ENCODE measurements at regions of chr10 and their contacts with region 1.

Region 1: GRCh38 chr10:100338434-100339036 is 8.5 kb upstream of the SCD start:
- DNase-seq: peak; percentile 76 to 88
- ATAC-seq: peak; percentile 89 to 96 (median 94)
- H3K4me3 ChIP-seq: no peak overlapping the region
- H3K4me3 Mint-ChIP-seq: no peak overlapping the region
- H3K27ac ChIP-seq: no peak overlapping the region
- H3K27ac Mint-ChIP-seq: peak overlapping the region in 1 of 2 donors; percentile 6
- H3K4me1 ChIP-seq: peaks cover 12% of the 10 kb centered on the region
- H3K4me1 Mint-ChIP-seq: peaks cover 0 to 10% of the 10 kb centered on the region in 2 donors
- H3K27me3 ChIP-seq: no peaks in the 10 kb centered on the region
- H3K27me3 Mint-ChIP-seq: peaks cover 12 to 20% of the 10 kb centered on the region in 2 donors
- CTCF ChIP-seq: peak; percentile 91

Region 2: GRCh38 chr10:100373298-100374136 is 35.0 kb after region 1 on chr10:
- intact Hi-C with region 1: loop called (anchors 5 kb)
- DNase-seq: peak; percentile 84 to 89
- ATAC-seq: peak; percentile 65 to 91 (median 84)
- H3K4me3 ChIP-seq: peak overlapping the region; percentile 65
- H3K4me3 Mint-ChIP-seq: no peak overlapping the region
- H3K27ac ChIP-seq: peak overlapping the region; percentile 90
- H3K27ac Mint-ChIP-seq: no peak overlapping the region
- H3K4me1 ChIP-seq: peaks cover 61% of the 10 kb centered on the region
- H3K4me1 Mint-ChIP-seq: peaks cover 31 to 42% of the 10 kb centered on the region in 2 donors
- H3K27me3 ChIP-seq: no peaks in the 10 kb centered on the region
- H3K27me3 Mint-ChIP-seq: peaks cover 0 to 7% of the 10 kb centered on the region in 2 donors
- CTCF ChIP-seq: no peak

Region 3: DNA sequence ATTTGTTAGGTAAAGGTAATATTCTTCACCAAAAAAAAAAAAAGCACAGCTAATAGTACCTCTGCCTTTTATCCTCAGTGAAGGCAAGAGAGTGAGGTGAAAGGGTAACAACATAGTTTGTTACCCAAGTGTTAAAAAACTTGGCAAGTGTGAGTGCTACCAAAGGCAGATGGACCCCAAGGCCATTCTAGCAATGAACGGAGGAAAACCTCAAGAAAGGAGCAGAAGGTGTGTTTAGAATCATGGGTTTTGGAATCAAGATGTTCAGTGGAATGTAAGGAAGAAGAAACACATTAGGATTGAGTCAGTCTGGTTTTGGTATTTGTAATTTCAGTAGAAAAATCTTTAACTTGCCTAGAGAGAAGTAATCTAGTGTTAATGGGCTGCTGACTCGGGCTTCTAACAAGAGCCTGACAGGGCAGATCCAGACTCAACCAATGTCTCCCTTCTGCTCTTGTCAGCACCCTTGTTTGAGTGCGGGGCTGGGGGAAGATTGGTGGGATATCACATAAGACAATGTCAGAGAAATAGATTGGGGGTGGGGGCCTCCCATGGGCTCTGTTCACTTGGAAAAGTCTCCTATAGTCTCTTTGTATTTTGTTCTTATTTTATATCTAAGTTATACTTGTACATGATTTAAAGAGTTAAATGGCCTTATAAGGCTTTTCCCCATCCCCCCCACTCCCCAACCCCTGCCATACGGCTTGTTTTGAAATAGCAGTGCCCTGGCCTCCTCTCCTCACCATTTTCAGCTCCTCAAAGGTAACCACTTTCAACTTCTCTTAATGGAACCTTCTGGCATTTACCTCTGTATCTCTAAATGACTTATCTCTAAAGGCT is 52.8 kb after region 1 on chr10:
- intact Hi-C with region 1: loop called (anchors 5 kb)
- DNase-seq: no peak
- ATAC-seq: peak; percentile 10 to 47 (median 14)
- H3K4me3 ChIP-seq: no peak overlapping the region
- H3K4me3 Mint-ChIP-seq: peak overlapping the region; percentile 43
- H3K27ac ChIP-seq: no peak overlapping the region
- H3K27ac Mint-ChIP-seq: peak overlapping the region in 1 of 2 donors; percentile 75
- H3K4me1 ChIP-seq: peaks cover 8% of the 10 kb centered on the region
- H3K4me1 Mint-ChIP-seq: peaks cover 15 to 16% of the 10 kb centered on the region in 2 donors
- H3K27me3 ChIP-seq: no peaks in the 10 kb centered on the region
- H3K27me3 Mint-ChIP-seq: peaks cover 0 to 6% of the 10 kb centered on the region in 2 donors
- CTCF ChIP-seq: no peak

Region 4: DNA sequence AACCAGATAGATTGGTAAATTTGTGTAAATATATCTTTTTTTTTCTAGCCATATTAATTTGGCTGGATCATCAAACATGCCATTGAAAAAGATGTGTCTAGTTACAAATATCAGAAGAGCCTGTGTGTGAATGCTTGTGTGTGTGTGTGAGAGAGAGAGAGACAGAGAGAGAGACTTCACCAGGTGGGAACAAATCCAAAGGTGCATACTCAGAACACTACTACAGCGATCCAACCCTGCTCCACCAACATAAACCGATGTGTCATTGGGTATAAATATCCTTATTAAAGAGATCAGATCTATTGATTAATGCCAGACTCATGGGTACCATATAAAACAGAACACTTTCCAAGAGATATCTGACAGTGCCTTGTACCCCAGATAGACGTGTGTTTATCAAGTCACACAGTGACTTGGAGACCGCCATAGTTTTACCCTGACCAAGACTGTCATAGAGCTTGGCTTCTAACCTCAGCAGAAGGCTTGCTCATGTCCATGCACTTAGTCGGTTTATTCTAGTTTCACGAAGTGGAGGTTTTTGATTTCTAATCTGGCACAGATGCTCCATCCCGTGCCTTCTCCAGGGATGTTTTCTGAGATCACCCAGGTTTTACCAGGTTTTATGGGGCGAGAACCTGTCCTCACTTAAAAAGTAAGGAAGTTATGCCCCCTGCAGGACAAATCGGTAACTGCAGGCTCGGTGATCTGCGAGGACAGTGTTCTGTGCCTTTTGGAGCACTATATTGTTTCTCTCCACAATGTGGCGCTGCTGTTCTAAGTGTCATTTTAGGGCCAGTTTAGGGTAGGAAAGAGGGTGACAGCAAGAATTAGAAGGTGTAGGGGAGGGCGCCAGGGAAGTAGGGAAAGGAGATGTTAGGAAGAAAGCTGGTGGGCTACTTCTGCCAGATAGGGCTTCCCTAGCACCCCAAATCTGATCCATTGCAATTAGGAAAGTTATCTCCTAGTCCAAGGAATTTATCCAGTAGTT is 95.0 kb after region 1 on chr10:
- intact Hi-C with region 1: loop called (anchors 1 kb)
- DNase-seq: peak; percentile 93 to 97
- ATAC-seq: peak; percentile 99 to 100 (median 100)
- H3K4me3 ChIP-seq: no peak overlapping the region
- H3K4me3 Mint-ChIP-seq: no peak overlapping the region
- H3K27ac ChIP-seq: no peak overlapping the region
- H3K27ac Mint-ChIP-seq: no peak overlapping the region
- H3K4me1 ChIP-seq: no peaks in the 10 kb centered on the region
- H3K4me1 Mint-ChIP-seq: no peaks in the 10 kb centered on the region
- H3K27me3 ChIP-seq: no peaks in the 10 kb centered on the region
- H3K27me3 Mint-ChIP-seq: no peaks in the 10 kb centered on the region
- CTCF ChIP-seq: peak; percentile 100

Region 5: GRCh38 chr10:100508691-100509150 is 170.2 kb after region 1 on chr10:
- intact Hi-C with region 1: loop called (anchors 1 kb)
- DNase-seq: peak in 1 of 2 donors; percentile 85
- ATAC-seq: peak; percentile 62 to 65 (median 62)
- H3K4me3 ChIP-seq: no peak overlapping the region
- H3K4me3 Mint-ChIP-seq: peak overlapping the region; percentile 45
- H3K27ac ChIP-seq: peak overlapping the region; percentile 1
- H3K27ac Mint-ChIP-seq: peak overlapping the region in 1 of 2 donors; percentile 6
- H3K4me1 ChIP-seq: peaks cover 31% of the 10 kb centered on the region
- H3K4me1 Mint-ChIP-seq: peaks cover 44 to 48% of the 10 kb centered on the region in 2 donors
- H3K27me3 ChIP-seq: no peaks in the 10 kb centered on the region
- H3K27me3 Mint-ChIP-seq: no peaks in the 10 kb centered on the region
- CTCF ChIP-seq: peak; percentile 60

Region 6: GRCh38 chr10:100518761-100519241 is 180.3 kb after region 1 on chr10:
- intact Hi-C with region 1: loop called (anchors 1 kb)
- DNase-seq: peak; percentile 43 to 79
- ATAC-seq: peak; percentile 70 to 82 (median 82)
- H3K4me3 ChIP-seq: no peak overlapping the region
- H3K4me3 Mint-ChIP-seq: no peak overlapping the region
- H3K27ac ChIP-seq: no peak overlapping the region
- H3K27ac Mint-ChIP-seq: no peak overlapping the region
- H3K4me1 ChIP-seq: peaks cover 7% of the 10 kb centered on the region
- H3K4me1 Mint-ChIP-seq: peaks cover 13 to 14% of the 10 kb centered on the region in 2 donors
- H3K27me3 ChIP-seq: peaks cover 7% of the 10 kb centered on the region
- H3K27me3 Mint-ChIP-seq: peaks cover 10 to 11% of the 10 kb centered on the region in 2 donors
- CTCF ChIP-seq: peak; percentile 81

Measured in natural killer cell (primary cell).